H1 (cell line): ENCODE measurements at regions of chr5 and their contacts with region 1.

Region 1: GRCh38 chr5:171365351-171365750 is 22.3 kb upstream of the NPM1 start:
- DNase-seq: peak in 1 of 2 experiments; percentile 53
- H3K4me3 ChIP-seq: no peak overlapping the region
- H3K27ac ChIP-seq: no peak overlapping the region
- H3K4me1 ChIP-seq: no peaks in the 10 kb centered on the region
- H3K27me3 ChIP-seq: no peaks in the 10 kb centered on the region
- CTCF ChIP-seq: peak; percentile 5 to 68 (median 54)
- EP300 ChIP-seq: no peak
- POLR2A ChIP-seq: no peak
- RAD21 ChIP-seq: peak; percentile 55 to 68

Region 2: GRCh38 chr5:171023508-171023907 is 341.8 kb before region 1 on chr5:
- CTCF ChIA-PET with region 1: no interaction called
- POLR2A ChIA-PET with region 1: no interaction called
- DNase-seq: no peak
- H3K4me3 ChIP-seq: no peak overlapping the region
- H3K27ac ChIP-seq: no peak overlapping the region
- H3K4me1 ChIP-seq: no peaks in the 10 kb centered on the region
- H3K27me3 ChIP-seq: no peaks in the 10 kb centered on the region
- CTCF ChIP-seq: no peak
- EP300 ChIP-seq: no peak
- POLR2A ChIP-seq: no peak
- RAD21 ChIP-seq: no peak

Region 3: GRCh38 chr5:171264843-171265242 is 100.5 kb before region 1 on chr5:
- CTCF ChIA-PET with region 1: no interaction called
- POLR2A ChIA-PET with region 1: no interaction called
- DNase-seq: no peak
- H3K4me3 ChIP-seq: no peak overlapping the region
- H3K27ac ChIP-seq: no peak overlapping the region
- H3K4me1 ChIP-seq: no peaks in the 10 kb centered on the region
- H3K27me3 ChIP-seq: no peaks in the 10 kb centered on the region
- CTCF ChIP-seq: no peak
- EP300 ChIP-seq: no peak
- POLR2A ChIP-seq: no peak
- RAD21 ChIP-seq: no peak

Region 4: DNA sequence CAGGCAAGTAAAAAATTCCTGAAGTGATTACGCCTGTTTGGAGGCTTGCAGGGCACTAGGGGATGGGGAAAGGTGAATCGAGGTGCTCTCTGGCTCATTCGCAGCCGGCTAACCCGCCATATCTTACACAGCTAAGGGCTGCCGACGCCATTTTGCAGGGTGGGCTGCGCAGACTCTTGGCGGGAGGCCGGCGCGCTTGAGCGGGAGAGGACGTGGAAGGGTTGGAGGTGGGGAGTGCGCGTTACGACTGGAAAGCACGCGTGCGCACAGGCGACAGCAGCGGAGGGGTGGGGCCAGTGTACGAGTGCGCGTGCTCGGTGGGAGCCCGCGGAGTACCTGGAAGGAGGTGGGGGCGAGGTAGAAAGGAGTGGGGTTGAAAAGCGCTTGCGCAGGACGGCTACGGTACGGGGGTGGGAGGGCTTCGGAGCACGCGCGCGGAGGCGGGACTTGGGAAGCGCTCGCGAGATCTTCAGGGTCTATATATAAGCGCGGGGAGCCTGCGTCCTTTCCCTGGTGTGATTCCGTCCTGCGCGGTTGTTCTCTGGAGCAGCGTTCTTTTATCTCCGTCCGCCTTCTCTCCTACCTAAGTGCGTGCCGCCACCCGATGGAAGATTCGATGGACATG is 22.1 kb after region 1 on chr5 and contains the start of gene NPM1:
- CTCF ChIA-PET with region 1: interaction called, 10 read pairs
- POLR2A ChIA-PET with region 1: interaction called, 105 read pairs
- DNase-seq: peak; percentile 95 to 99
- H3K4me3 ChIP-seq: peak within 1 kb of the TSS; percentile 89 to 97 (median 92)
- H3K27ac ChIP-seq: peak within 1 kb of the TSS; percentile 96
- H3K4me1 ChIP-seq: peaks cover 3 to 13% (median 5%) of the 10 kb centered on the region in 4 experiments; a peak in 6 of 7 replicates
- H3K27me3 ChIP-seq: no peaks in the 10 kb centered on the region
- CTCF ChIP-seq: no peak
- EP300 ChIP-seq: peak in 1 of 2 experiments; percentile 30; a peak in 1 of 3 replicates
- POLR2A ChIP-seq: peak; percentile 97 to 98
- RAD21 ChIP-seq: no peak
- total RNA-seq, gene NPM1: 4,042 and 4,211 TPM in 2 replicates

Region 5: DNA sequence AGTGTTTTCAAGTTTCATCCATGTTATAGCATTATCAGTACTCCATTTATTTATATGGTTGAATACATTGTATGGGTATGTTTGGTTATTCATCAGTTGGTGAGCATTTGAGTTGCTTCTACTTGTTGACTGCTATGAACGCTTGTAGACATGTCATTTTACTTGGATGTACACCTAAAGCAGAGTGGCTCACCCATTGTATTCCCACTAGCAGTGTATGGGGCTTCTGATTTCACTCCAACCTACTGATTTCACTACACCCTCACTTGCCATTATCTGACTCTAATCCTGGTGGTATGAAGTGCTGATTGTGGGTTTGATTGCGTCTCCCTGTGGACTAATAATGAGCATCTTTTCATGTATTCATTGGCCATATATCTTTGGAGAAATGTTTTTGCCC is 31.8 kb after region 1 on chr5:
- CTCF ChIA-PET with region 1: interaction called, 3 read pairs
- POLR2A ChIA-PET with region 1: interaction called, 14 read pairs
- DNase-seq: no peak
- H3K4me3 ChIP-seq: no peak overlapping the region
- H3K27ac ChIP-seq: no peak overlapping the region
- H3K4me1 ChIP-seq: peaks cover 0 to 5% (median 1%) of the 10 kb centered on the region in 4 experiments; a peak in 2 of 7 replicates
- H3K27me3 ChIP-seq: no peaks in the 10 kb centered on the region
- CTCF ChIP-seq: no peak
- EP300 ChIP-seq: no peak
- POLR2A ChIP-seq: peak in 1 of 2 experiments; percentile 51; a peak in 1 of 3 replicates
- RAD21 ChIP-seq: no peak